Aorta (tissue), 5 donors: ENCODE measurements at regions of chr17 and their contacts with region 1.

Region 1: GRCh38 chr17:75515496-75516254 is at the start of gene CASKIN2:
- DNase-seq: peak; percentile 96 to 99
- ATAC-seq: peak; percentile 94
- H3K4me3 ChIP-seq: peak within 1 kb of the TSS; percentile 61 to 77
- H3K27ac ChIP-seq: peak within 1 kb of the TSS in 1 of 2 donors; percentile 34
- H3K4me1 ChIP-seq: peaks cover 0 to 2% of the 10 kb centered on the region in 2 donors
- H3K27me3 ChIP-seq: no peaks in the 10 kb centered on the region
- total RNA-seq, gene CASKIN2: 61.5 to 63.4 TPM

Region 2: GRCh38 chr17:75319904-75320691 is 195.6 kb before region 1 on chr17:
- intact Hi-C with region 1: loop called (anchors 2 to 10 kb)
- DNase-seq: no peak
- ATAC-seq: no peak
- H3K4me3 ChIP-seq: no peak overlapping the region
- H3K27ac ChIP-seq: no peak overlapping the region
- H3K4me1 ChIP-seq: no peaks in the 10 kb centered on the region
- H3K27me3 ChIP-seq: no peaks in the 10 kb centered on the region

Region 3: GRCh38 chr17:75430159-75430974 is 85.3 kb before region 1 on chr17:
- intact Hi-C with region 1: loop called (anchors 1 to 2 kb)
- DNase-seq: peak; percentile 56 to 81
- ATAC-seq: peak; percentile 17
- H3K4me3 ChIP-seq: no peak overlapping the region
- H3K27ac ChIP-seq: peak overlapping the region; percentile 73 to 76
- H3K4me1 ChIP-seq: peaks cover 2 to 3% of the 10 kb centered on the region in 2 donors
- H3K27me3 ChIP-seq: no peaks in the 10 kb centered on the region

Region 4: DNA sequence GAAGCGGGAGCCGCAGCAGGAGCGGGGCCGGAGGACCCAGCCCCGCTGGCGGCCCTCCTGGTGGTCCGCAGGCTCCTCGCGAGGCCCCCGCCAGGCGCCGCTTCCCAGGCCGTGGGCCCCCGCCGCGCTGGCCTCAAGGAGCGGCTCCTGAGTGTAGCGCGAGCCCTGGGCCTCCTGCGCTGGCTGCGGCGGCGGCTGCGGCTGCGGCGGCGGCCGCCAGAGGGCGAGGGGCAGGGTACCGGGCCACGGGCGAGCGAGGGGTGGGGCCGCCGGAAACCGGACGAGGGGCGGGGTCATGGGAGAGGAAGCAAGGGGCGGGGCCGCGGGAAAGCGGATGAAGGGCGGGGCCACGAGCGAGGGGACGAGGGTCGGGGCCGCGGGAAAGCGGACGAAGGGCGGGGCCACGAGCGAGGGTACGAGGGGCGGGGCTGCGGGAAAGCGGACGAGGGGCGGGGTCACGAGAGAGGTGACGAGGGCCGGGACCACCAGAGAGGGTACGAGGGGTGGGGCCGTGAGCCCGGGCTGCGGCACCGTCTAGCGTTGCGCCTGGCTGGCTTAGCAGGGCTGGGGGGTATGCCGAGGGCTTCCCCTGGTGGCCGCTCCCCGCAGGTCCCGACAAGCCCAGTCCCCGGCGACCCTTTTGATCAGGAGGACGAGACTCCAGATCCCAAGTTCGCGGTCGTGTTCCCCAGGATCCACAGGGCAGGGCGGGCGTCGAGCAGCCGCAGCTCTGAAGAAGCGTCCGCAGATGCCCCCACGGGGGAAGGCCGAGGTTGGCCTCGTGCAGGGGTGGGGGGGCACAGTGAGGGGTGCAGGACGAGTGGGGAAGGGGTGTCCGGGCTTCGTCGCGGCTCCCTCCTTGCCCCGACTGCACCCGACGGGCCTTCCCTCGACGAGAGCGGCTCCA is 73.6 kb after region 1 on chr17:
- intact Hi-C with region 1: loop called in 1 of 2 experiments (anchors 5 kb)
- DNase-seq: peak; percentile 97 to 99
- ATAC-seq: peak; percentile 94
- H3K4me3 ChIP-seq: peak overlapping the region; percentile 17 to 28
- H3K27ac ChIP-seq: peak overlapping the region in 1 of 2 donors; percentile 45
- H3K4me1 ChIP-seq: no peaks in the 10 kb centered on the region
- H3K27me3 ChIP-seq: no peaks in the 10 kb centered on the region

Region 5: DNA sequence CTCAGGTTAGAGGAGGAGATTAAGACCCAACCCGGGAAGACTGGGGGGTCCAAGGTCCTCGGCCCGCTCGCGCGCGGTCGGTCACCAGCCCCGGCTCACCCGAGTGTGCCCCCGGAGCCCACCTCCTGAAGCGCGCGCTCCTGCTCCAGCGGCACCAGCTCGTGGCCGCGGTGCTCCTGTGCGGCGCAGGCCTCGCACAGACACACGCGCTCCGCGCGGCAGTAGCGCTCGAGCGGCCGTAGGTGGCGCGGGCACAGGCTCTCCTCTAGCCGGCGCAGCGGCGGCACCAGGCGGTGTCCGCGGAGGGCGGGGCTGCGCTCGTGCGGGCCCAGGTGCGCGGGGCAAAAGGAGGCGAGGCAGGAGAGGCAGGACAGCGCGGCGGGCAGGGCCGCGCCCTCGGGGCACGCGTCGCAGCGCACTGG is 362.1 kb after region 1 on chr17:
- intact Hi-C with region 1: loop called in 1 of 2 experiments (anchors 5 kb)
- DNase-seq: peak; percentile 84 to 92
- ATAC-seq: peak; percentile 64
- H3K4me3 ChIP-seq: peak overlapping the region; percentile 4 to 88
- H3K27ac ChIP-seq: peak overlapping the region; percentile 59 to 79
- H3K4me1 ChIP-seq: peaks cover 0 to 3% of the 10 kb centered on the region in 2 donors
- H3K27me3 ChIP-seq: no peaks in the 10 kb centered on the region